Mucosa of descending colon (tissue), 3 donors: ENCODE measurements at regions of chr4 and their contacts with region 1.

Region 1: DNA sequence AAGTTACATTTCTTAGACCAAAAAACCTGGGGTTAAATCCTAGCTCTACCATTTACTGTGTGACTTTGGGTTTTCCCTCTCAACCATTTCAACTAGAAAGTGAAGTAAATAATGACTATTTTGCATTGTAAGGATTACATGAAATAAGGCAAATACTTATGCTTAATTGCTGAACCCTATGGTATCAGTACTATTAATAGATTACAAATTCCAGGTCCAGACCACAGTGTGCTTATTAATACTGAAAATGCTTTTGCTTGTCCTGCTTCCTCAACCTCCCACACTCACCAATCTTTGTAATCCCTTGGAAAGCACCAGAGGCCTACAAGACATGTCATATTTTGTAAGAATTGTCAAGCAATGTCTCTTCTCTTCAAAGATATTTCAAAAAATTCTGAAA is 456.5 kb downstream of the SPOCK3 start:
- DNase-seq: no peak
- ATAC-seq: no peak
- H3K4me3 ChIP-seq: no peak overlapping the region
- H3K4me1 ChIP-seq: no peaks in the 10 kb centered on the region
- CTCF ChIP-seq: no peak

Region 2: GRCh38 chr4:166363198-166363597 is 414.6 kb before region 1 on chr4:
- intact Hi-C with region 1: no loop called
- DNase-seq: no peak
- ATAC-seq: no peak
- H3K4me3 ChIP-seq: no peak overlapping the region
- H3K4me1 ChIP-seq: no peaks in the 10 kb centered on the region
- CTCF ChIP-seq: no peak

Region 3: DNA sequence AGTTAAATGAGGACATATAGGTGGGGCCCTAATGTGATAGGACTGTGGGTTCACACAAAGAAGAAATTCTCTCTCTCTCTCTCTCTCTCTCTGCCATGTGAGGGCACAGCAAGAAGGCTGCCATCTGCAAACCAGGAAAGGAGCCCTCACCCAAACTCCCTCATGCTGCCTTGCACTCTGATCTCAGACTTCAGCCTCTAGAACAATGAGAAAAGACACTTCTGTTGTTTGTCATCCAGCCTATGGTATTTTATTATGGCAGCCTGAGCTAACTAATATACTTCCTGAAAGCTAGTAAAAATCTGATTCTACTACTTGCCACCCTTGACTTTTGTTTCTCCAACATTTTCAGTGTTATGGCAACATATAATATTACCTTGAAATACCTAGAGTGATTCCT is 30.6 kb after region 1 on chr4:
- intact Hi-C with region 1: loop called in 1 of 2 experiments (anchors 2 kb)
- DNase-seq: no peak
- ATAC-seq: peak; percentile 54
- H3K4me3 ChIP-seq: no peak overlapping the region
- H3K4me1 ChIP-seq: no peaks in the 10 kb centered on the region
- CTCF ChIP-seq: no peak